HCT116 (cell line): ENCODE measurements at regions of chr5 and their contacts with region 1.

Region 1: GRCh38 chr5:172293054-172293744 is 9.6 kb upstream of the UBTD2 start:
- DNase-seq: peak; percentile 63
- ATAC-seq: peak; percentile 97
- H3K4me3 ChIP-seq: no peak overlapping the region
- H3K27ac ChIP-seq: no peak overlapping the region
- H3K4me1 ChIP-seq: peaks cover 4 to 5% of the 10 kb centered on the region in 2 experiments; a peak in 2 of 4 replicates
- H3K27me3 ChIP-seq: no peaks in the 10 kb centered on the region
- CTCF ChIP-seq: peak; percentile 84 to 92 (median 92)
- POLR2A ChIP-seq: no peak
- RAD21 ChIP-seq: peak; percentile 96

Region 2: DNA sequence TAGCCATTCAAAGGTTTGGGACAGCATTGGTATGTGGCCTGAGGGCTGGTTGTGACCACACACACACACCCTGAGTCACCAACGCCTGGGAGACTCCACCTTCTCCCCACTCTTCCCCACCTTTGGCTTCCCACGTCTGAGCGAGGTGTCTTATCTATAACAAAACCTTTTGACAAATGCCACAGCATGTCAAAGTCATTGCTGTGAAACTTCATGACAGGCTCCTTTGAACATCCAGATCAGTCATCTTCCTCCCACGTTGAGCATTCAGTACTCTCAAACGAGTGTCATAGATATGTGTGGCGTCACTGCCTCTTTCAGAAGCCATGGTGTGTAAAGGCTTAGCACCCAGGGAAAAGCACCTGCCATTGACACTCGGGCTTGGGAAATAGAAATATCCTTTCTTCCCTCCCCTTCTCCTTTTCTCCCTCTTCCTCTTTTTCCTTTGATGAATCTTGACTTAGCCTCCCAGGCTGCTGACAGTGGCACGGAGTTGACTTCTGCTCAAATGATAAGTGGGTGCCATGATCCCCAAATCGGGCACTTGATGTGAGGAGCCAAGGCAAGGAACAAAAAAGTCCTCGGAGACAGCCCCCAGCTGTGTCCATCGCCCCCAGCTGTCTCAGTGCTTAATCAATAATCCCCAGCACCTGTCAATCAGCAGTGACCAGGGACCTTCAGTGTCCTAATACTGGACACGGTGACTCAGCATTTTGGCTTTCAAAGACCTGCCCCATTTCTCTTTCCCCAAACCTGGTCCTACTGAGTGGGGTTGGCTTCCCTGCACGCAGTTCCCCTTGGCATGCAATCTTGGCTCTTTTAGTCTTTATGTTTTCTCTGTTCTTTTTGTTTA is 758.9 kb before region 1 on chr5:
- CTCF ChIA-PET with region 1: no interaction called
- POLR2A ChIA-PET with region 1: no interaction called
- RAD21 ChIA-PET with region 1: no interaction called
- intact Hi-C with region 1: no loop called
- DNase-seq: no peak
- ATAC-seq: peak; percentile 77
- H3K4me3 ChIP-seq: no peak overlapping the region
- H3K27ac ChIP-seq: no peak overlapping the region
- H3K4me1 ChIP-seq: peaks cover 5 to 37% of the 10 kb centered on the region in 2 experiments; a peak in 3 of 4 replicates
- H3K27me3 ChIP-seq: no peaks in the 10 kb centered on the region
- CTCF ChIP-seq: no peak
- POLR2A ChIP-seq: no peak
- RAD21 ChIP-seq: no peak

Region 3: GRCh38 chr5:172006321-172007174 is 286.7 kb before region 1 on chr5 and contains the start of gene FBXW11:
- CTCF ChIA-PET with region 1: interaction called, 3 read pairs
- POLR2A ChIA-PET with region 1: no interaction called
- RAD21 ChIA-PET with region 1: no interaction called
- intact Hi-C with region 1: loop called (anchors 10 kb)
- DNase-seq: peak; percentile 95
- ATAC-seq: peak; percentile 90
- H3K4me3 ChIP-seq: peak within 1 kb of the TSS; percentile 78 to 99
- H3K27ac ChIP-seq: peak within 1 kb of the TSS; percentile 97
- H3K4me1 ChIP-seq: peaks cover 9 to 36% of the 10 kb centered on the region in 2 experiments; a peak in 3 of 4 replicates
- H3K27me3 ChIP-seq: no peaks in the 10 kb centered on the region
- CTCF ChIP-seq: no peak
- POLR2A ChIP-seq: peak; percentile 96
- RAD21 ChIP-seq: no peak
- total RNA-seq, gene FBXW11: 52.0 TPM

Region 4: GRCh38 chr5:172106511-172107356 is 186.5 kb before region 1 on chr5:
- CTCF ChIA-PET with region 1: interaction called, 5 read pairs
- POLR2A ChIA-PET with region 1: no interaction called
- RAD21 ChIA-PET with region 1: interaction called in 1 of 2 experiments, 4 read pairs
- intact Hi-C with region 1: loop called (anchors 2 kb)
- DNase-seq: no peak
- ATAC-seq: peak; percentile 50
- H3K4me3 ChIP-seq: peak overlapping the region in 1 of 2 experiments; percentile 14; a peak in 1 of 4 replicates
- H3K27ac ChIP-seq: no peak overlapping the region
- H3K4me1 ChIP-seq: peaks cover 17 to 45% of the 10 kb centered on the region in 2 experiments
- H3K27me3 ChIP-seq: no peaks in the 10 kb centered on the region
- CTCF ChIP-seq: peak; percentile 86 to 95 (median 93)
- POLR2A ChIP-seq: no peak
- RAD21 ChIP-seq: peak; percentile 80

Region 5: DNA sequence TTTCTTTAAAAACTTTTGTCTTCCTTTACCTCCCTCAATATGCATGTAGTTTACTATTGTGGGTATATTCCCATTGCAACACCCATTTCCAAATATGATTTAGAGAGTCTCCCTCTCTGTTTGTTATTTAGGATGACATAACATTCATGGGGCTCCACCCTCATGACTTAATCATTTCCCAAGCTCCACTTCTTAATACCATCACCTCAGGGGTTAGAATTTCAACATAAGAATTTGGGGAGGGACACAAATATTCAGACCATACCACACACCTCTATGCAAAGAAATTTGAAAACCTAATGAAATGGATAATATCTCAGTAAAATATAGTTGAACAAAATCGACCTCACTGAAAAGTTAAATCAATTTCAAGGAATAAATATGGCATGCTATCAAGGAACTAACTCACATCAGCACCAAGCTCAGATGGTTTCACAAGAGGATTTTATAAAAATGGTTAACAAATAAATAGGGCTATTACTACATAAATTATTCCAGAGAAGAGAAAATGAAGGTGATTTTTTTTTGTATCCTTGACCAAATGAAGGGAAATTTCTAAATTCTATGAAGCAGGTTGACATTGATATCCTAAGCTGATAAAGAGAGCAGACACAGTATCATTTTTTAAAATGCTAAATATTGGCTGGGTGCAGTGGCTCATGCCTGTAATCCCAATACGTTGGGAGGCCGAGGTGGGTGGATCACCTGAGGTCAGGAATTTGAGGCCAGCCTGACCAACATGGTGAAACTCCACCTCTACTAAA is 10.6 kb after region 1 on chr5:
- CTCF ChIA-PET with region 1: interaction called, 10 read pairs
- POLR2A ChIA-PET with region 1: interaction called, 6 read pairs
- RAD21 ChIA-PET with region 1: no interaction called
- intact Hi-C with region 1: no loop called
- DNase-seq: peak; percentile 56
- ATAC-seq: peak; percentile 69
- H3K4me3 ChIP-seq: no peak overlapping the region
- H3K27ac ChIP-seq: peak overlapping the region; percentile 24; the same call in 1 of the 2 replicates
- H3K4me1 ChIP-seq: peaks cover 21 to 27% of the 10 kb centered on the region in 2 experiments
- H3K27me3 ChIP-seq: no peaks in the 10 kb centered on the region
- CTCF ChIP-seq: no peak
- POLR2A ChIP-seq: no peak
- RAD21 ChIP-seq: no peak

Region 6: GRCh38 chr5:172625966-172626635 is 332.9 kb after region 1 on chr5:
- CTCF ChIA-PET with region 1: no interaction called
- POLR2A ChIA-PET with region 1: no interaction called
- RAD21 ChIA-PET with region 1: no interaction called
- intact Hi-C with region 1: no loop called
- DNase-seq: no peak
- ATAC-seq: no peak
- H3K4me3 ChIP-seq: no peak overlapping the region
- H3K27ac ChIP-seq: no peak overlapping the region
- H3K4me1 ChIP-seq: peaks cover 7% of the 10 kb centered on the region in 2 experiments; a peak in 3 of 4 replicates
- H3K27me3 ChIP-seq: no peaks in the 10 kb centered on the region
- CTCF ChIP-seq: no peak
- POLR2A ChIP-seq: no peak
- RAD21 ChIP-seq: no peak